ENCODE measurements at regions of chr10 and their contacts with region 1.

Region 1: GRCh38 chr10:21495752-21496342 is 29.6 kb downstream of the SKIDA1 start:
- DNase-seq: peak; percentile 90
- ATAC-seq: peak; percentile 85

Region 2: GRCh38 chr10:21572578-21572977 is 76.7 kb after region 1 on chr10:
- intact Hi-C with region 1: no loop called
- DNase-seq: no peak
- ATAC-seq: peak; percentile 91

Region 3: GRCh38 chr10:21732067-21732772 is 236.4 kb after region 1 on chr10:
- intact Hi-C with region 1: loop called (anchors 10 kb)
- DNase-seq: no peak
- ATAC-seq: peak; percentile 93

Measured in sciatic nerve (tissue), 2 donors.